ENCODE measurements at regions of chr1 and their contacts with region 1.

Region 1: DNA sequence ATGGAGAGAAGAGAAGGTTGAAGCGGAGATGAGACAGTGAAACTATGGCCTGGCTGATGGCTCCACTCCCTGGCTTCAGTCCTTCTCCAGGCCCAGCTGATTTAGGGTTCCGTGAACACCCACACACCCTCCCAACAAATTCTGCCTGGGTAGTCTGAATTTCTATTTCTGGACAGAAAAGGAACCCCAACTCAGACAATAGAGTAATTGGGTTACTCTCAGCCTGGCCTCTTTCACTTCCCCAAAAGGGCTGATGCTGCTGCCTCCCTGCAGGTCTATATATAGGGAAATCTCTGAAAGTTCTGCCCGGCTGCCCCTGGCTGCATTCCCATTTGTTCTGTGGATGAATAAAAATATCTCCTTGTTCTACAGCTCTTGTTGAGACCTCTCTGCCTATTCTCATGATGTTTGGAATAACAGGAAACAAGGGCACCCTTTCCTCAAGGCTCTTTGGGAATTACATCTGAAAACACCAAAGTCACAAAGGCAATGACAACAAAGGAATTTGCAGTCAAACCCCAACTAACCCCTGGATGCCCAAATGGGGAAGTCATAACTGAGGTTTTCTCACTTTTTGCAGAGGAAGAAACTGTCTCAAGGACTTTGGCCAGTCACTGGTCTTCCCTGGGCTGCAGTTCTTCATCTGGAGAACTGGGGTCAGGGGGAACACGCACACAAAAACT is 11.4 kb upstream of the ZSCAN20 start:
- DNase-seq: peak in 1 of 3 donors; percentile 35
- ATAC-seq: peak; percentile 63
- H3K4me3 ChIP-seq: no peak overlapping the region
- H3K4me1 ChIP-seq: no peaks in the 10 kb centered on the region
- CTCF ChIP-seq: no peak

Region 2: DNA sequence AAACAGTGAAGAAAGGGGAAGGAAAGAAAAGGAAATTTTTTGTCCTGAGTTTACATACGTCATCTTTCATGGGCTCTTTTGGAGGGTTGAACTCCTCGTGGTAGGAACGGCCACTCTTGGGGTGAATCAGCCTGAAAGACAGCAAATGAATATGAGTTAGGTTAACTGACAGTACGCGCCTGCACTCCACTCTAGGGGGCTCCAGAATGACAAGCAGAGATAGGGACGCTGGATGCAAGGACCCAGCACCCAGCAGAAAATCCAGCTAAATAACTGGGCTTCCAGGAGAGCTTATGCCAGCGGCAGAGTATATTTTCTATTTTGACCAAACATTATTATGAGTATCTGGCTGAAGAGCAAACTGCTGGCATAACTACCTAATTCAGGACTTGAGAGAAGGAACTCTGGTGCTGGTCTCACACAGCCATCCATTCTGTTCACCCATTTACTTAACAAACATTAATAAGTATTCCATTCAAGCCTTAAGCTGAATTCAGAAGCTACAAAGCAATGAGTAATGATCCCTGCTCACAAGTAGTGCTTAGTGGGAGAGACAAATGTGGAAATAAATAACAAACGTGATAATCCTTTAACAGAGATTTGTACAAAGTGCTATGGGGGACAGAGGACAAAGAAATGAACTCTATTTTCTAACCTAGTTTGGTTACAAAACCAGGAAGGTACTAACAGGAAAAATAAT is 446.5 kb before region 1 on chr1:
- intact Hi-C with region 1: no loop called
- DNase-seq: no peak
- ATAC-seq: no peak
- H3K4me3 ChIP-seq: no peak overlapping the region
- H3K4me1 ChIP-seq: peaks cover 3% of the 10 kb centered on the region
- CTCF ChIP-seq: no peak

Region 3: GRCh38 chr1:33378976-33379375 is 82.1 kb before region 1 on chr1:
- intact Hi-C with region 1: loop called in 1 of 2 experiments (anchors 10 kb)
- DNase-seq: no peak
- ATAC-seq: no peak
- H3K4me3 ChIP-seq: no peak overlapping the region
- H3K4me1 ChIP-seq: no peaks in the 10 kb centered on the region
- CTCF ChIP-seq: no peak

Measured in mucosa of descending colon (tissue), 3 donors.